Testis (tissue), 5 donors: ENCODE measurements at regions of chr6 and their contacts with region 1.

Region 1: GRCh38 chr6:52419809-52420670 is at the start of gene EFHC1:
- DNase-seq: peak; percentile 99
- H3K4me3 ChIP-seq: peak within 1 kb of the TSS; percentile 67 to 74
- H3K27ac ChIP-seq: peak within 1 kb of the TSS; percentile 86 to 90
- H3K4me1 ChIP-seq: no peaks in the 10 kb centered on the region
- H3K27me3 ChIP-seq: no peaks in the 10 kb centered on the region
- CTCF ChIP-seq: peak in 1 of 3 experiments; percentile 11
- POLR2A ChIP-seq: peak; percentile 24
- total RNA-seq, gene EFHC1: 41.8 to 62.9 TPM

Region 2: DNA sequence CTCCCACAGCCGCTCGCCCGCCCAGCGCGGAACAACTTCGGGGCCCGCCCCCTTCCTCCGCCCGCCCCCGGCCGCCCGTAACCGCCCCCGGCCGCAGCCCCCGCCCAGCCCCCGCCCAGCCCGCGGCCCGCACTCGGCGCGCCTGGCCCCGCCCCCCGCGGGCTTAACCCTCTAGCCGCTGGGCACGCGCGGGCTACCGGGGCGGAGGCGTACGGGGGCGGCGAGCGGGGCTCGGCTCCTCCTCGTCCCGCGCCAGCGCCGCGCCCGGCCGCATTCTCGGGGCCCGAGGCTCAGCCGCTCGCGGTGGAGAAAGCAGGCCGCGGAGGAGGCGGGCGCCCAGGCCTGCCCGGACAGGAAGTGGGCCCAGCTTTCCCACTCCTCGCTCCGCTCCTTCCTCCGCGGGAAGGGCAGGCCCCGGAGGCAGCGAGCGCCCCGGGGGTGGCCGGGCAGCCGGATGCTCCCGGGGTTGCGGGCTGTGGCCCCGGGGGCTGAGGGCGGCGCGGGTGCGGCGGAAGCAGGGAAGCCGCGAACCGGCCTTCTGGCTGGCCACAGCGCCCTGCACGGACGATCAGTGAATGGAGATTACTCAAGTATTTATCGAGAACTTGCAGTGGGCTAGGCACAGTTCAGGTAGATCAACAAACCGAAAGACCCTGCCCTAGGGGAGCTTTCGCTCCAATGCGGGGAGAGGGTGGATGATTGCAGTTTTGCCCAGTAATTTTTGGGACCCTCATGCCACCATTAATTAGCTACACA is 157.2 kb after region 1 on chr6 and contains the start of gene TRAM2:
- intact Hi-C with region 1: loop called (anchors 10 kb)
- DNase-seq: peak; percentile 84
- H3K4me3 ChIP-seq: peak within 1 kb of the TSS; percentile 87 to 92
- H3K27ac ChIP-seq: peak within 1 kb of the TSS; percentile 89 to 99
- H3K4me1 ChIP-seq: peaks cover 35% of the 10 kb centered on the region
- H3K27me3 ChIP-seq: no peaks in the 10 kb centered on the region
- CTCF ChIP-seq: no peak
- POLR2A ChIP-seq: no peak
- total RNA-seq, gene TRAM2: 21.1 to 26.1 TPM

Region 3: DNA sequence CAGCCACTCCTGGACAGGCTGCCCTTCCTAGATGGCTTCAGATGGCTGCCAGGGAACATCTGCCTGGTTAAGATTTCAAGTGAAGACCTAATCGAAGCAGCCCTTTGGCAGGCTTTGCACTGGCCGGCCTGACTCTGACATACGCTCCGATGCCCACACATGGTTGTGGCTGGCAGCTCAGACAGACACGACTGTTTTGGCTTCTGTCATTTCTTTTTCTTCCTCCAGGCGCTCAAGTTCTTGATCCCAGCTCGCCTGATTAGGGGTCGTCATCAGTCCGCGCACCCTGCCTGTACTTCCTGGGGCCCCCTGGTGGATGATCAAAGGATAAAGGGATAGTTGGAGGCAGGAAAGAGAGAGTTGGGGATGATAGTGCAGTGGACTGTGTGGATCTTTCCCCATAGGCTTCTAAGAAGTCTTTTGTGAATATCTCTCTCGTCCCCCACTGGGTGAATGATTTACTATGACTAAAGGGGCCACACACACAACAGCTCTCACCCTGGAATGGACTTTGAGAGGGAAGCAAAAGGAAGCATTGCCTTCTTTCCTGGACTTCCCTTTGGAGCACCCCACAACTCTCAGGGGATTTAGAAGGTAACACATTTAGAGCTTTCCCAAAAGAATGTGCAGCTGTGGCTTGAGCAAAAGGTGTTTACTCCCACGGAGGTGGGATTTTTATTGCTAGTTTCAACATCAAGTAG is 178.2 kb after region 1 on chr6:
- intact Hi-C with region 1: loop called (anchors 10 kb)
- DNase-seq: peak; percentile 69
- H3K4me3 ChIP-seq: no peak overlapping the region
- H3K27ac ChIP-seq: peak overlapping the region in 1 of 2 donors; percentile 3
- H3K4me1 ChIP-seq: peaks cover 23% of the 10 kb centered on the region
- H3K27me3 ChIP-seq: no peaks in the 10 kb centered on the region
- CTCF ChIP-seq: peak; percentile 70 to 78 (median 74)
- POLR2A ChIP-seq: no peak

Region 4: DNA sequence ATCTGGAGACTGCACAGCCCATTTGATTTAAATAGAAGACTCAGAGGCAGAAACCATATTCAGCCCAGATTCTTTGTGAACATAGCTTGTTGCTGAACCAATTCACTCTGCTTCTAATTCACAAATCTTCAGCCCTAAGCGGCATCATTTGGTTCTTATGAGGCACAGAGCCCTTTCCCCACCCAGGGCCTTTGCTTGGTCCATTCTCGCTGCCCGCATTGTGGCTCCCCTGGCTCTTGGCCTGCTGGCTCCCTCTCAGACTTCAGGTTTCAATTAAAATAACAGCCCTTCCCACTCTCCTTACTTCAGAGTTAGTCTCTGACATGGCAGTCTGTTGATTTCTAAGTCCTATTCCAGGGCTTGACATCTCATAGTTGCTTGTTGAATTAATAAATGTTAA is 241.5 kb after region 1 on chr6:
- intact Hi-C with region 1: loop called (anchors 2 kb)
- DNase-seq: no peak
- H3K4me3 ChIP-seq: no peak overlapping the region
- H3K27ac ChIP-seq: no peak overlapping the region
- H3K4me1 ChIP-seq: peaks cover 7% of the 10 kb centered on the region
- H3K27me3 ChIP-seq: no peaks in the 10 kb centered on the region
- CTCF ChIP-seq: no peak
- POLR2A ChIP-seq: no peak